Stomach (tissue), 19 donors: ENCODE measurements at regions of chr10 and their contacts with region 1.

Region 1: GRCh38 chr10:49518982-49519578 is 19.8 kb downstream of the ERCC6 start:
- DNase-seq: peak in 1 of 2 donors; percentile 68
- H3K4me3 ChIP-seq: no peak overlapping the region
- H3K27ac ChIP-seq: no peak overlapping the region
- H3K4me1 ChIP-seq: peaks cover 0 to 7% (median 0%) of the 10 kb centered on the region in 4 donors
- H3K27me3 ChIP-seq: no peaks in the 10 kb centered on the region
- CTCF ChIP-seq: peak in 5 of 7 experiments; percentile 32 to 59 (median 44)
- EP300 ChIP-seq: no peak
- POLR2A ChIP-seq: no peak

Region 2: DNA sequence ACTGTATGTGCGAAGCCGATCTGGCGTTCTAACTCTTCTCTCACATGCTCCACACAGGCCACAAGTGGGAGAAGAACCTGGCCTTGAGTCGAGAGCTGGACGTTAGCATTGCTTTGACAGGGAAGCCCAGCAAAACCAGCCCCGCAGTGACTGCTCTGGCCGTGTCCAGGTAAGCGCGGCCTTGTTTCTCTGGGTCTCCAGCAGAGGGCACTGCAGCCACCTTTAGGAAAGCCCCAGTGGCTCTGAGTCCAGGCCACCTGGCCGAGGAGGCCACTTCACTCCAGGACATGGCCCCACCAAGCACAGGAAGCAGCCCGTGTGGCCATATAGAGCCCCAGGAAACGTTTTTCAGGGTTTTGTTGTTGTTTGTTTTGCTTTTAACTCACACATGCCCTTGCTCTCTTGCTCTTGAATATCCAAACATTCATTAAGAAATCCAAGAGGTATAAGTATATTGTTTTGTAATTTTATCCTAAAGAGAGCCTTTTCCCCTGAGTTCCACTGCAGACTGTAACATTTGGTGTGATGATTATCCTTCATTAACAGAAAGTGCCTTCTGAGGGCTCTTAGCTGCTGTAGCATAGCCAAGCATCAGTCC is 537.7 kb before region 1 on chr10:
- intact Hi-C with region 1: loop called (anchors 10 kb)
- DNase-seq: peak; percentile 41 to 71
- H3K4me3 ChIP-seq: no peak overlapping the region
- H3K27ac ChIP-seq: no peak overlapping the region
- H3K4me1 ChIP-seq: peaks cover 0 to 4% (median 0%) of the 10 kb centered on the region in 4 donors
- H3K27me3 ChIP-seq: no peaks in the 10 kb centered on the region
- CTCF ChIP-seq: peak in 5 of 7 experiments; percentile 40 to 73 (median 68)
- EP300 ChIP-seq: no peak
- POLR2A ChIP-seq: no peak

Region 3: DNA sequence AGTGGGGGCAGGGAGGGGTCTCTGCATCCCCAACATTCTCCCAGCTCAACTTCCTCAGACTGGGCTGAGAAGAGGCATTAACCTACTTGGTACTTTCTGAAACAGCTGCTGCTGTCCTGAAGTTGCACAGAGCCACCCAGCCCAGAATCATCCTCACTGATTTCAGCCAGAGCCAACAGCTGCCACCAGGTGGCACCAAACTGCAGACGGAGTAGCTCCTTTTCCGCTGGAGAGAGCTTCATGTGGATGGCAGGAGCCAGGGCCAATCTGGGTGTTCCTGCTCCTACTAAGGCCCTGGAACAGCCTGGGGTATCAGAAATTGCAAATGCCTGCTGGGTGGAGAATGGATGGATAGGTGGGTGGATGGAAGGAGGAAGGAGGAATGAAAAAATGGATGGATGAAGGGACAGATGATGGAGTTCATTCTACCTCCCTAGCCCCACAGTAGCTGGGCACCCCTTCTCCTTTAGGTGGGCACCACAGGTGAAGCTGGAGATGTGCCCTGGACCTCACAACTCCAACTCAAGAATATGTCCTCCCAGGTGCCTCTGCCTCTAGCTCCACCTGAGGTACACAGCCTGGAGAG is 111.4 kb before region 1 on chr10:
- intact Hi-C with region 1: loop called (anchors 10 kb)
- DNase-seq: peak; percentile 81 to 89
- H3K4me3 ChIP-seq: no peak overlapping the region
- H3K27ac ChIP-seq: no peak overlapping the region
- H3K4me1 ChIP-seq: no peaks in the 10 kb centered on the region
- H3K27me3 ChIP-seq: peaks cover 0 to 79% (median 12%) of the 10 kb centered on the region in 3 donors
- CTCF ChIP-seq: peak in 5 of 7 experiments; percentile 58 to 80 (median 75)
- EP300 ChIP-seq: no peak
- POLR2A ChIP-seq: no peak